ENCODE measurements at regions of chrX and their contacts with region 1.

Region 1: GRCh38 chrX:150575416-150575808 is 7.0 kb downstream of the MTM1 start:
- DNase-seq: peak; percentile 85
- H3K4me3 Mint-ChIP-seq: peak overlapping the region; percentile 68
- H3K27ac Mint-ChIP-seq: peak overlapping the region; percentile 97
- H3K4me1 Mint-ChIP-seq: peaks cover 85% of the 10 kb centered on the region
- H3K27me3 Mint-ChIP-seq: no peaks in the 10 kb centered on the region

Region 2: GRCh38 chrX:149938427-149939270 is 636.8 kb before region 1 on chrX and contains the start of gene EOLA2:
- CTCF ChIA-PET with region 1: no interaction called
- POLR2A ChIA-PET with region 1: no interaction called
- intact Hi-C with region 1: loop called (anchors 10 kb)
- DNase-seq: peak; percentile 95
- H3K4me3 Mint-ChIP-seq: peak within 1 kb of the TSS; percentile 85
- H3K27ac Mint-ChIP-seq: peak within 1 kb of the TSS; percentile 99
- H3K4me1 Mint-ChIP-seq: no peaks in the 10 kb centered on the region
- H3K27me3 Mint-ChIP-seq: no peaks in the 10 kb centered on the region
- total RNA-seq, gene EOLA2: 32.4 to 33.7 TPM

Region 3: DNA sequence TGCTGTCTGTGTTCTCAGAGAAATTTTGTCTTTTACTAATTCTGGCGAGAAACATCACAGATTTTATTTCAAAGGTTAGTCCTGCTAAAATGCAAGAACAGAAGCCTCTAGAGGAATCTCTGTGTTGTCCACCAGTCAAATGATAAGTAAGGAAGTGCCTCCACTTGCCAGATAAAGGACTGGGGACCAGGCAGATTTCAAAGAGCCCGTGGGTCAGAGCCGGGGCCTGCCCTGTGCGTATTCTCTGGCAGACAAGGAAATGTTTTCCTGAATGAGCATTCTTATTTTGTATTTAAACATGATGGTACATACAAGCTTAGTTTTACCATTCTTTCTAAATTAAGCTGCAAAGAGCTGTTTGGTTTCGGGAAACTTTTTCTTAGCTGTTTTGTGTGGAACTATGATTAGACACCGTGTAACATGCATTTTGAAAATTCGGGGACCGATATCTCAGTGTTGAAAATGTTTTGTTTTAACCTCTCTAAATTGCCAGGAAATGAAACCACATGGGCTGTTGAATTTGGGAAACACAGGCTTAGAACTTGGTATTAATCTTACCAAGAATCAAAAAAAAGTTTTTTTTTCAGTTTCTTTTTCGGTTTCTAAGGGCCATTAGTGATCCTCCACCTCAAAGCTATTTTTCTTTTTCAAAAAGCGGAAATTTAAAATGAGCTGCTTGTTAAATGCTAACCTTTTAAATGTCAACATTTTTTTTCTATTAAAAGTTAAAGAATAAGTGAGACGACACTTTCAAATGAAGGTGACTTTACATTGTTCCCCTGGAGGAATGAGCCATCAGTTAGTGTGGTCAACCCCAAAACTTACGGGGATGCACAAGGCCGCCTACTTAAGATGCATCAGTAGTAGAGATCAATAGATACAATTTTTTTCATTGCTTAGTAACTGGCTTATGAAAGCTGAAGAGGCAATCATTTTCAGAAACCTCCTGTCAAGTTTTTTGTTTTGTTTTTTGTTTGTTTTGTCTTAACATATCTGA is 96.6 kb before region 1 on chrX:
- CTCF ChIA-PET with region 1: no interaction called
- POLR2A ChIA-PET with region 1: interaction called, 21 read pairs
- intact Hi-C with region 1: loop called (anchors 1 kb)
- DNase-seq: peak; percentile 61
- H3K4me3 Mint-ChIP-seq: peak overlapping the region; percentile 62
- H3K27ac Mint-ChIP-seq: peak overlapping the region; percentile 82
- H3K4me1 Mint-ChIP-seq: peaks cover 62% of the 10 kb centered on the region
- H3K27me3 Mint-ChIP-seq: no peaks in the 10 kb centered on the region

Region 4: DNA sequence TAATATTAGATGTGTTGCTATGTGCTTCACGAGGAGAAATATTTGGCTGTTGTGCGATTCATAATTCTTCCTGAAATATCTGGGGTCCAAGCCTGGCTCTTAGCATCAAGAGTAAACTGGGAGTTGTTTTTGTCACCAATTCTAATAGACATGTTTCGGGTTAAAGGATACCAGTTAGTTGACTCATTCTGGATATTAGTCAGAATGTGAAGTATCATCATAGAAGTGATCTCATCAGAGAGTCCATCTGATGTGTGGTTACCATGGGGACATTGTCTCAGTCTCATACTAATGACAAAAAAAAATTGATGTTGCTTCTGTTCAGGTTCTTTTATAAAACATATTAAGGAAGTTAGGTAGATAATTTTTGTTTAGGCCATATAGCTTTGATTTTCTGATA is 60.5 kb after region 1 on chrX:
- CTCF ChIA-PET with region 1: interaction called, 5 read pairs
- POLR2A ChIA-PET with region 1: no interaction called
- intact Hi-C with region 1: loop called (anchors 1 kb)
- DNase-seq: no peak
- H3K4me3 Mint-ChIP-seq: no peak overlapping the region
- H3K27ac Mint-ChIP-seq: peak overlapping the region; percentile 36
- H3K4me1 Mint-ChIP-seq: peaks cover 13% of the 10 kb centered on the region
- H3K27me3 Mint-ChIP-seq: no peaks in the 10 kb centered on the region

Region 5: DNA sequence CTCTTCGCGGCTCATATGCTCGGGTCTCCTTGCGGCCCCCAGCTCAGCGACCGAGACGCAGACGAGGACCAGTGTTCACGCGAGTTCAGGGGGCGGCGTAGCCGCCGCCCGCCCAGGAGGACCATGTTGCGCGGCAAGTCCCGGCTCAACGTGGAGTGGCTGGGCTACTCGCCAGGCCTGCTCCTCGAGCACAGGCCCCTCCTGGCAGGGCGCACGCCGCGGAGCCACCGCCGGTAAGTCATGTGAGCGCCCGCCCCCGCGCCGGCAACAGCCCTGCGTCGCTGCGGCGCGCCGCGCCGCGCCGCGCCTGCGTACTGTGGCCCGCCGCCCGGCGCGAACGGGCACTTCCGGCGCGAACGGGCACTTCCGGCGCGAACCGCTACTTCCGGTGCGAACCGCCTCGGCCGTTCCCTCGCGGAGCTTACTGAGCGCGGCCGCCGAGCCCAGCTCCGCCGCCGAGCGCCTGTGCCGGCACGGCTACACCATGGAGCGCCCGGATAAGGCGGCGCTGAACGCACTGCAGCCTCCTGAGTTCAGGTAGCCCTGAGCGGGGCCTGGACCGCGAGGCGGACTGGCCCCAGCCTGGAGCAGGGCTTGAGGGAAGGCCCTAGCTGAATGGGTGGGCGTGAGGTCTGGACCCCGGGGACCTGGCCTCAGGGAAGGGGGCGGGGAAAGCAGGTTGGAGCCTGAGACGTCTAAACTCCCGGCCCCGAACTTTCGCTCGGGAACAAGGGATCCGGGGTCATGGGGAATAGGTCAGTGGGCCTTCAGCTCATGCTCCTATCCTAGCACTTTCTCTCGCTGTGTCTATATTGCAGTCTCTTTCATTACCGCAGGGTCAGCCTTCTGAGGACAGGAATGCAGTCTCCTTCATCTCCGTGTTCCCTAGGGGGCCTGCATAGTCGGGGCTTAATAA is 821.7 kb after region 1 on chrX and contains the start of gene VMA21:
- CTCF ChIA-PET with region 1: no interaction called
- POLR2A ChIA-PET with region 1: no interaction called
- intact Hi-C with region 1: loop called (anchors 10 kb)
- DNase-seq: peak; percentile 89
- H3K4me3 Mint-ChIP-seq: peak within 1 kb of the TSS; percentile 89
- H3K27ac Mint-ChIP-seq: peak within 1 kb of the TSS; percentile 96
- H3K4me1 Mint-ChIP-seq: peaks cover 45% of the 10 kb centered on the region
- H3K27me3 Mint-ChIP-seq: no peaks in the 10 kb centered on the region
- total RNA-seq, gene VMA21: 39.9 to 43.6 TPM

Measured in activated CD4-positive, alpha-beta memory T cell treated with anti-CD3 and anti-CD28 coated beads for 36 hours (primary cell).